ENCODE measurements at regions of chr9 and their contacts with region 1.

Region 1: DNA sequence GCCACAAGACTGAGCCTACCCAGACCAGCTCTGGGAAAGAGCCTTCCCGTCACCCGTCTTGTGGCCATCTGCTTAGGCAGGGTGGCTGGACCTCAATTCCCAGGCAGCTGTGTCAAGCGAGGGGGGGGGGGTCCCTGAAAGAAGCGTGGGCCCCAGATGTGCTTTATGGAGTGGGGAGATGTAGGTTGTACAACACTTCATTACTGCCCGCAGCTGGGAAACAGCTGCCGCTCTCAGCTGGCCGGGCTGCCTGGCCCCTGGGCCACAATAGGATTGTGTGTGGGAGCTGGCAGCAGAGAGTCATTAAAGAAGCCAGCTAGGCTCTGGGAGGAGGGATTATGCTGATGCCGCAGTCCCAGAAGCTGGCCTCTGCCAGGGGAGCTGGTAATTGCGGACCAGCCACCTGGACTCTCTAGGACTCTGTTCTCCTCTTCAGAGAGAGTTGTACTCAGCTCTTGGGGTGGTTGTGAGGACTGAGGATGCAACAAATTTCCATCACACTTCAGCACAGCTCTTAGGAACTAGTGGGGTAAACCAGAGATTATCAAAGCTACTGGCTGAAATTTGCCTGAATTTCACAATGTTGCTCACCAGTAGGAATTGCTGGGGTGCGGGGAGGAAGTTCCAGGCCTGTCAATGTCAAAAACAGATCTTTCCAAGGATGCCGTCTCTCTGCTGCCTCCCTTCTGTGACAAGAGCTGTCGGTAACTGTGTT is 145.5 kb downstream of the GADD45G start:
- DNase-seq: peak; percentile 89
- ATAC-seq: peak; percentile 69

Region 2: GRCh38 chr9:89802781-89803355 is 52.6 kb after region 1 on chr9:
- intact Hi-C with region 1: loop called (anchors 5 kb)
- DNase-seq: peak; percentile 86
- ATAC-seq: peak; percentile 94

Region 3: GRCh38 chr9:89850601-89851268 is 100.4 kb after region 1 on chr9:
- intact Hi-C with region 1: no loop called
- DNase-seq: no peak
- ATAC-seq: peak; percentile 73

Measured in Right ventricle myocardium inferior (tissue), 1 donor.